ENCODE measurements at regions of chr15 and their contacts with region 1.

Region 1: DNA sequence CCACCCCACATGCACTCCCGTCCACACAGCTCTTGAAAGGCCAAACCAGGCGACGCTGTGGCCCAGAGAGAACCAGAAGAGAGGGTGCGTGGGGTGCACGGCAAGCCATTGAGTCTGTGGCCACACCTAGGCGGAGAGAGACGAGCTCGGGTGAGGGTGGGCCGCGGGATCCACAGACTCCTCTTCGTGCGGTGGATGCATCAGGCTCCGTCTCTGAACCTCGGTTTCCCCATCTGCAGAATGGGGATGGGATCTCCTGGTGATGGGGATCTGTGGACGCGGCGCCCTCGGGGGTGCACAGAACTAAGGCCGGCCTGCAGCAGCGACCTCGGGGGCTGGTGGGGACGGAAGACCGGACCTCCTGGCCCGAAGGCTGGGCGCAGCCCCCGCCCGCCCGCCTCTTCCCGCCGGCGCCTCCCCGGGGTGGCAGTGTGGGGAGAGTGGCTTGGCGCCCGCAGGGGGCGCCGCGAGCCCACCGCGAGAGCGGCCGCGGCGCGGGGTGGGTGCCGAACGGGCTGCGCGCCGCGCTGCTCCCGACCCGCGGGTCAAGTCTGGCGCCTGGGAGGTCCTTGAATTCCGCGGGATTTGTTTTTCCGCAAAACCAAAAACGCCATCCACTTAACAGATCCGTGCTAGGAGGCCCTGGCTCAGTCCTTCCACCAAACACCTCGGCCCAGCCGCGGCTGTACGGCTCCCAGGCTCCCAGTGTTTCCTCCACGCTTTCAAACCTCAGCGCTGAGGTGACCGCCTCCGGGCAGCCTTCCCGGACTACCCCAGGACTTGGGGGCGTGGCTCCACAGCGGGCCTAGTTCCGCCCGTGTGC is 13.2 kb upstream of the ADPGK start:
- DNase-seq: peak; percentile 49
- H3K4me3 Mint-ChIP-seq: peak overlapping the region; percentile 71
- H3K27ac Mint-ChIP-seq: no peak overlapping the region
- H3K4me1 Mint-ChIP-seq: peaks cover 11% of the 10 kb centered on the region
- H3K27me3 Mint-ChIP-seq: peaks cover 20% of the 10 kb centered on the region

Region 2: GRCh38 chr15:73081321-73081958 is 284.7 kb after region 1 on chr15:
- CTCF ChIA-PET with region 1: interaction called, 5 read pairs
- POLR2A ChIA-PET with region 1: no interaction called
- intact Hi-C with region 1: loop called (anchors 1 kb)
- DNase-seq: no peak
- H3K4me3 Mint-ChIP-seq: no peak overlapping the region
- H3K27ac Mint-ChIP-seq: no peak overlapping the region
- H3K4me1 Mint-ChIP-seq: peaks cover 2% of the 10 kb centered on the region
- H3K27me3 Mint-ChIP-seq: no peaks in the 10 kb centered on the region

Region 3: GRCh38 chr15:74036271-74037170 is 1239.8 kb after region 1 on chr15:
- CTCF ChIA-PET with region 1: no interaction called
- POLR2A ChIA-PET with region 1: no interaction called
- intact Hi-C with region 1: no loop called
- DNase-seq: no peak
- H3K4me3 Mint-ChIP-seq: no peak overlapping the region
- H3K27ac Mint-ChIP-seq: no peak overlapping the region
- H3K4me1 Mint-ChIP-seq: no peaks in the 10 kb centered on the region
- H3K27me3 Mint-ChIP-seq: no peaks in the 10 kb centered on the region